ENCODE measurements at regions of chr3 and their contacts with region 1.

Region 1: DNA sequence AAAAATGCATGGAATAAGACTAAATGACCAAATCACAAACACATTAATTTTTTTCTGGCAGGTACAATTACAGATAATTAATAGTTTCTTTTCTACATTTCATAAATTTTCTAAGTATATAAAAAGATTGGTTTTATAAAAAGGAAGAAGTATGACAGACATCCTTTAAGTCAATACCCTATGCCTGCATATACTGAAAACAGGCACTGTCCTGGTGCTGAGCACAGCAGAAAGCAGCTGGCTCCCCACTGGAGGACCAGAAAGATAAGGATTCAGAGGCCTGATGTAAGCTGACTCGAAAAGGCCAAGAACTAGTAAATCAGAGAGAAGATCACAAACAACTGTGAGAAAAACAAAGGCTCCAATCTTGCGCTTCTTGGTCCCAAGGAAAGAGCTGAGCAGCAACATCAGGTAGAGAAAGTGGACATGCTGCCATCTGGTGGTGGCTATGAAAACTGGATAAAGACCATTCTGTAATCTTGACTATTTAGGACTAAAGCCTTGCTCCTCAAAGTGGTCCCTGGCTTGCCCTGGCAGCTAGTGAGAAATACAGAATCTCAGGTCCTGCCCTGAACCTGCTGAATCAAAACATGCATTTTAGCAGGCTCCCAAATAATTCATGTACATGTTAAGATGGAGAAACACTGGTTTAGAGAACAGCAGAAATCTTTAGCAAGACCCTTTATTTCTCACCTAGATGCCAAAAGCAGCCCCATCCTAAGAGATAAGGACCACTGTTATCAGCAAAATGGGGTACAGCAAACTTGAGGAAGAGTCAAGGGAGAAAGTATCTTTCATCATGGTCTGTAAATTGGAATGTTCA is 76.0 kb downstream of the TRANK1 start:
- DNase-seq: peak; percentile 63
- ATAC-seq: peak; percentile 88
- H3K4me3 ChIP-seq: no peak overlapping the region
- H3K27ac ChIP-seq: no peak overlapping the region
- H3K4me1 ChIP-seq: no peaks in the 10 kb centered on the region
- H3K27me3 ChIP-seq: no peaks in the 10 kb centered on the region
- CTCF ChIP-seq: peak; percentile 70
- POLR2A ChIP-seq: no peak
- RAD21 ChIP-seq: peak; percentile 64

Region 2: GRCh38 chr3:35965908-35966307 is 902.9 kb before region 1 on chr3:
- CTCF ChIA-PET with region 1: no interaction called
- POLR2A ChIA-PET with region 1: no interaction called
- dilution Hi-C with region 1: no loop called
- in situ Hi-C with region 1: no loop called
- intact Hi-C with region 1: loop called (anchors 5 kb)
- DNase-seq: peak; percentile 55
- ATAC-seq: peak; percentile 84
- H3K4me3 ChIP-seq: no peak overlapping the region
- H3K27ac ChIP-seq: no peak overlapping the region
- H3K4me1 ChIP-seq: no peaks in the 10 kb centered on the region
- H3K27me3 ChIP-seq: no peaks in the 10 kb centered on the region
- CTCF ChIP-seq: peak; percentile 59
- POLR2A ChIP-seq: no peak
- RAD21 ChIP-seq: peak; percentile 67

Region 3: DNA sequence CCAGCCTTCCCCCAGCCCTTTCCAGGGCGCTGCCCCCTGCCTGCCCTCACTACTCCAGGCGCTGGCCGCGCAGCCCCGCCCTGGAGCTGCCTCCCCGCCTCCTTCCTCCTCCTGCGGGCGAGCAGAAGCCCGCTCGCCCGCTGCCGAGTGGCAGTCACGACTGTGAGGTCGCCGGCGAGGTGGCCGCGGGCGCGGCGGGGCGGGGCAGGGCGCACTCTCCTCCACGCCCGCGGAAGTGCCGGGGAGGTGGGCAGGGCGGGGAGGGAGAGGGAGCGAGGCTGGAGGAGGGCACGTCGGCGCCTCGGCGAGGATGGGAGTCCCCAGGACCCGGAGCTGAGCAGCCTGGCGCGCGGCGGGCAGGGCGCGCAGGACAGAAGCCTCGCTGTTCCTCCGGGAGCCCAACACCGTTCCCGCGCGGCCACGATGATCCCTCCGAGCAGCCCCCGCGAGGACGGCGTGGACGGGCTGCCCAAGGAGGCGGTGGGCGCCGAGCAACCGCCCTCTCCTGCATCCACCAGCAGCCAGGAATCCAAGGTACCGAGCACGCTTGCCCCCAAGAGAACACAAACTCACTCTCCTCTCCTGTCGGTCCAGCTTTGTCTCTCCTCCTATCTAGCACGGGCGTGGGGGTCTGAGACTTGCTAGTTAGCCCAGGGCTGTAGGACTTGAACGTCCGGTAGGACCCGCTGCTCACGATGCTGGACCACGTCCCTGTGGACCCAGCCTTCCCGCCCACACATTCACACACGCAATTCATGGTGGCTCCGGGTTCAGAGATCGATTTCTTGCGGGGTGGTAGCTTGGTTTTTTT is 488.4 kb before region 1 on chr3 and contains the start of gene STAC:
- CTCF ChIA-PET with region 1: no interaction called
- POLR2A ChIA-PET with region 1: no interaction called
- dilution Hi-C with region 1: no loop called
- in situ Hi-C with region 1: no loop called
- intact Hi-C with region 1: loop called (anchors 5 kb)
- DNase-seq: no peak
- ATAC-seq: peak; percentile 65
- H3K4me3 ChIP-seq: no peak within 1 kb of the TSS
- H3K27ac ChIP-seq: no peak within 1 kb of the TSS
- H3K4me1 ChIP-seq: no peaks in the 10 kb centered on the region
- H3K27me3 ChIP-seq: no peaks in the 10 kb centered on the region
- CTCF ChIP-seq: no peak
- POLR2A ChIP-seq: no peak
- RAD21 ChIP-seq: no peak
- total RNA-seq, gene STAC: 0.28 and 0.36 TPM in 2 replicates

Region 4: DNA sequence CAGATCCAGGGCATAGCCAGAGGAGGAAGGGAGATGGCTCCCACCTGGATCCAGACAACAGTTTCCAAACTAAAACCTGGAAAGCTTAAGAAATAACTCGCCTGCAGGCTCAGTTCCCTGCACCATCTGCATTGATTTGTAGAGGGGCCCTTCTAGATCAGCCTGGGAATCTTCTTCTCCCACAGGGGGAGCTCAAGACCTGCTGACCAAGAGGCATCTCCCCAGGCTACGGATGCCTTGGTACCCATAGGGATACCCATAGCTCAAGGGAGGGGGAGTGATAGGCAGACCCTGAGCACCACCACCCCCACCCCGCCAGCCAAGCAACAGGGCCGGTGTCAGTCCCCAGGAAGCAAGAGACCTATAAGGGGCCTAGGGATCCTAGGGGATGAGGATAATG is 76.5 kb before region 1 on chr3:
- CTCF ChIA-PET with region 1: no interaction called
- POLR2A ChIA-PET with region 1: no interaction called
- dilution Hi-C with region 1: no loop called
- in situ Hi-C with region 1: no loop called
- intact Hi-C with region 1: loop called (anchors 2 kb)
- DNase-seq: peak; percentile 24
- ATAC-seq: peak; percentile 75
- H3K4me3 ChIP-seq: no peak overlapping the region
- H3K27ac ChIP-seq: no peak overlapping the region
- H3K4me1 ChIP-seq: no peaks in the 10 kb centered on the region
- H3K27me3 ChIP-seq: peaks cover 2% of the 10 kb centered on the region; the same call in 1 of the 2 replicates
- CTCF ChIP-seq: peak; percentile 47
- POLR2A ChIP-seq: no peak
- RAD21 ChIP-seq: peak; percentile 64

Measured in IMR-90 (cell line).